ENCODE measurements at regions of chr12 and their contacts with region 1.

Region 1: GRCh38 chr12:63103494-63104131 is 47.4 kb downstream of the AVPR1A start:
- DNase-seq: no peak
- H3K4me3 ChIP-seq: no peak overlapping the region
- H3K27ac ChIP-seq: no peak overlapping the region
- H3K4me1 ChIP-seq: no peaks in the 10 kb centered on the region
- H3K27me3 ChIP-seq: no peaks in the 10 kb centered on the region
- CTCF ChIP-seq: peak; percentile 79 to 86

Region 2: DNA sequence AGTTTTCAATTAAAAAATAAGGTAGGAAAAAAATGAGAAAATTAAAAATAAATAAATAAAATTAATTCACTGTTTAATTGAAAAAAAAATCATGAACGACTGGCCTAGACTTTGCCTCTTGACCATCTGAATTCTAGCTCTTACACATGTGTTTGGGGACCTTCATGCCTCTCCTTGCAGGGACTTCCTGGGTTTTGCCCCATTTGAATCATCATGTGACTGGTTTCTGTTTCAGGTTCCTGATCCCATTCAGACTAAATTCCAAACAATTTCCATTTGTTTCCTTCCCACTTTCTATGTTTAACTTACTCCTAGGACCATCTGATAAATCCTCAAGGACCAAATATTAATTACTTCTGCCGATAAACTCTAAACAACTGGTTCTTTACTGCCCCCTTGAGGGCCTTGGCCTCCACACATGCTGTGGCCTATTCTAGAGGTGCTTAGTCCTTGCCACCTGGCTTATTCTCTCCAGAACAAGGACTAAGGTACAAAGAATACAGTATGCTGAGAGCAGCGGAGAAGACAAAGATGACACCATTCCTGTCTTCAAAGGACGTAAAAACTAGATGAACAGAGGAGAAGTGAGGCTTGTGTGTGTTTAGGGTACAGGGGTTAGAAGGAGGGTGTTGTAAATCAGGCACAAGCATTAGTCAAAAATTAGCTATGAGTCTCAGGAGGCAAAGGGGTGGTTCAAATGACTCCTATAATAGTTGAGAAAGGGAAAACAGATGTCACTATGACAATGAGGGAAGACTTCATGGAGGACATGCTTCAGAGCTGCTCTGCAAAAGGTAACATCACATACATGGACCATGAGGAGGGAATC is 173.1 kb after region 1 on chr12:
- intact Hi-C with region 1: loop called (anchors 10 kb)
- DNase-seq: no peak
- H3K4me3 ChIP-seq: no peak overlapping the region
- H3K27ac ChIP-seq: no peak overlapping the region
- H3K4me1 ChIP-seq: no peaks in the 10 kb centered on the region
- H3K27me3 ChIP-seq: no peaks in the 10 kb centered on the region
- CTCF ChIP-seq: peak; percentile 48 to 57

Region 3: GRCh38 chr12:63802012-63802608 is 698.5 kb after region 1 on chr12:
- intact Hi-C with region 1: loop called (anchors 5 kb)
- DNase-seq: no peak
- H3K4me3 ChIP-seq: no peak overlapping the region
- H3K27ac ChIP-seq: no peak overlapping the region
- H3K4me1 ChIP-seq: no peaks in the 10 kb centered on the region
- H3K27me3 ChIP-seq: no peaks in the 10 kb centered on the region
- CTCF ChIP-seq: peak; percentile 67 to 70

Measured in tibial artery (tissue), 4 donors.